ENCODE measurements at regions of chr20 and their contacts with region 1.

Region 1: DNA sequence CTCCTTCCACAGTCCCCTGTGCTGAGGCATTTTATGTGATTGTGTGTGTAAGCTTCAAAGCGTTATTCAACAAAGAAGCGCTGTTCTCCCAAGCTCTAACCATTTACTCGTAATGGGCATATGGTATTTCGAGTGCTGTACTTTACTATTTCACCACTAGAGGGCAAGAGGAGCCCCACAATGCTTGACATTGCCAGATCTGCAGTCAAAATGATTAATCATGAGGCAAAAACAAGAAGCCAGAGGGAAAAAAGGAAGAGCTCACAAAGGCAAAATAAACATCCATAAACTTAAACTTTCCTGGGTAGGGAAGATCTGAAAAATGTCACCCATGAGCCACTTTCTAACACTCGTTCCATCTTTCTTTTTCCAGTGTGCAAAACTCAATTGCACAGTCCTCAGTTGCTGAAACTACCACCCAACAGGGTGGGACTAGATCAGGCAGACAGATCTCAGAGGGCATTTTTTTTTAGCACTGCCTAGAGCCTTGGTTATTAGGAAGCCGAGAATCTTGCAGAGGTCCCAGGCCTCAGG is 215.0 kb upstream of the PLCB4 start:
- DNase-seq: peak; percentile 89
- ATAC-seq: peak; percentile 95
- H3K4me3 ChIP-seq: no peak overlapping the region
- H3K27ac ChIP-seq: no peak overlapping the region
- H3K4me1 ChIP-seq: peaks cover 19% of the 10 kb centered on the region
- H3K27me3 ChIP-seq: no peaks in the 10 kb centered on the region
- CTCF ChIP-seq: peak; percentile 91
- EP300 ChIP-seq: no peak
- POLR2A ChIP-seq: no peak
- RAD21 ChIP-seq: peak; percentile 79

Region 2: GRCh38 chr20:8809107-8809953 is 44.5 kb before region 1 on chr20:
- CTCF ChIA-PET with region 1: no interaction called
- POLR2A ChIA-PET with region 1: no interaction called
- in situ Hi-C with region 1: no loop called
- intact Hi-C with region 1: loop called (anchors 1 kb)
- DNase-seq: peak; percentile 95
- ATAC-seq: peak; percentile 98
- H3K4me3 ChIP-seq: peak overlapping the region in 2 of 3 experiments; percentile 9 to 34; a peak in 1 of 6 replicates
- H3K27ac ChIP-seq: peak overlapping the region; percentile 74
- H3K4me1 ChIP-seq: peaks cover 59% of the 10 kb centered on the region
- H3K27me3 ChIP-seq: no peaks in the 10 kb centered on the region
- CTCF ChIP-seq: no peak
- EP300 ChIP-seq: peak; percentile 70 to 90; a peak in 3 of 4 replicates
- POLR2A ChIP-seq: no peak
- RAD21 ChIP-seq: no peak

Region 3: GRCh38 chr20:8932192-8933165 is 78.6 kb after region 1 on chr20:
- CTCF ChIA-PET with region 1: no interaction called
- POLR2A ChIA-PET with region 1: no interaction called
- in situ Hi-C with region 1: no loop called
- intact Hi-C with region 1: no loop called
- DNase-seq: no peak
- ATAC-seq: no peak
- H3K4me3 ChIP-seq: no peak overlapping the region
- H3K27ac ChIP-seq: no peak overlapping the region
- H3K4me1 ChIP-seq: no peaks in the 10 kb centered on the region
- H3K27me3 ChIP-seq: peaks cover 0 to 8% of the 10 kb centered on the region in 2 experiments; a peak in 2 of 5 replicates
- CTCF ChIP-seq: no peak
- EP300 ChIP-seq: no peak
- POLR2A ChIP-seq: no peak
- RAD21 ChIP-seq: no peak

Region 4: DNA sequence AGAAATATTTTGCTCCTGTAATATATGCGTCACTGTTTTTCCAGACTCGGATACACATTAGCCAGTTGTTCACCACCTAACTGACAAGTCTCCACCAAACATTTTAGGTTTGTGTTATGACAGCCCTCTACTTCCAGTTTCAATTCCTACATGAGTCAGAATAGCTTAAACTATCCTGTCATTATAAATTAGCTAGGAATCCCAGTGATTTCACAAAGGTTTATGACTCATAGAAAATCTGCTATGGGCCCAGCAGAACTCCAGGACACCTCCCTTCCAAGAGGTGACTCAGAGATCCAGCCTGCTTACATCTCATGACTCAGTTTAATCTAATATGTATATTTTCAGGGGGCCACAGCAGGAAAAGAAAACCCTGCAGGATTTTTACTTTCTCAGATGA is 197.6 kb after region 1 on chr20:
- CTCF ChIA-PET with region 1: no interaction called
- POLR2A ChIA-PET with region 1: no interaction called
- in situ Hi-C with region 1: no loop called
- intact Hi-C with region 1: loop called (anchors 10 kb)
- DNase-seq: peak; percentile 43
- ATAC-seq: no peak
- H3K4me3 ChIP-seq: no peak overlapping the region
- H3K27ac ChIP-seq: no peak overlapping the region
- H3K4me1 ChIP-seq: no peaks in the 10 kb centered on the region
- H3K27me3 ChIP-seq: peaks cover 0 to 10% of the 10 kb centered on the region in 2 experiments; a peak in 1 of 5 replicates
- CTCF ChIP-seq: no peak
- EP300 ChIP-seq: no peak
- POLR2A ChIP-seq: no peak
- RAD21 ChIP-seq: no peak

Region 5: GRCh38 chr20:9215539-9215938 is 361.7 kb after region 1 on chr20:
- CTCF ChIA-PET with region 1: interaction called, 3 read pairs
- POLR2A ChIA-PET with region 1: no interaction called
- in situ Hi-C with region 1: no loop called
- intact Hi-C with region 1: loop called (anchors 5 kb)
- DNase-seq: peak; percentile 41
- ATAC-seq: peak; percentile 78
- H3K4me3 ChIP-seq: no peak overlapping the region
- H3K27ac ChIP-seq: no peak overlapping the region
- H3K4me1 ChIP-seq: no peaks in the 10 kb centered on the region
- H3K27me3 ChIP-seq: peaks cover 0 to 14% of the 10 kb centered on the region in 2 experiments; a peak in 2 of 5 replicates
- CTCF ChIP-seq: peak; percentile 47
- EP300 ChIP-seq: no peak
- POLR2A ChIP-seq: no peak
- RAD21 ChIP-seq: peak; percentile 35; the same call in 1 of the 2 replicates

Region 6: DNA sequence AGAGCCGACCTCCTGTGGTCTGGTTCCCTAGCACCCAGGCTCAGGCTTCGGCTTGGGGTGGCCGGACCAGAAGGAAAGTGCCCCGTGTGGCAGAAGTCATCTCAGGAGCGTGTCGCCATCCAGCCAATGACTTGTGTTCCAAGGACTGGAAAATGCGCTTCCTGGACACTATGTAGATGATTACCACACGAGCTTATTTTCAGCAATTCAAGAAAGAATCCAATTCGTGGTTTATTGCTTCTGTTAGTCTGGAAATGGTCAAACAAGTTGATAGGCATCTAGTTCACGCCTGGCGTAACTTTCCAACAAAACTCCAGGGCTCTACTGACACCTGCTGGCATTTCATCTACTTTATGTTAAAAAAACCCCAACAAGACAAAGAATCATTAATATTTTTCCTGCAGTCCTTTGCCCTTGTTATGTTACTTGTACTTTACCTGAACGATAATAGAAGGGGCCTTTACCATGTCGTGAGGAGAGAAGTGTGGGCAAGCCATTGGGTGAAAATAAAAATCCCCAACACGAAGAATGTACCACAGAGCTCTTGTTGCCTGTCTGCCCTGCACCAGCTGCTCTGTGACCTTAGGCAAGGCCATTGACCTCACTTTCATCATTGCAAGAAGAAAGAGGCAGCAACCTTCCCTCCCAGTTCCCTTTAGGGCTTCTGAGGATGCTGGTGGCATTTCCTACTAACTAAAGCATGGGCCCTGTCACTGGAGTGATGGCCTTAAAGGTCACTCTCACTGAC is 505.9 kb after region 1 on chr20:
- CTCF ChIA-PET with region 1: interaction called, 20 read pairs
- POLR2A ChIA-PET with region 1: no interaction called
- in situ Hi-C with region 1: loop called (anchors 10 kb)
- intact Hi-C with region 1: loop called (anchors 1 kb)
- DNase-seq: peak; percentile 67
- ATAC-seq: peak; percentile 97
- H3K4me3 ChIP-seq: peak overlapping the region in 1 of 3 experiments; percentile 31; a peak in 2 of 6 replicates
- H3K27ac ChIP-seq: no peak overlapping the region
- H3K4me1 ChIP-seq: peaks cover 11% of the 10 kb centered on the region
- H3K27me3 ChIP-seq: peaks cover 0 to 3% of the 10 kb centered on the region in 2 experiments; a peak in 1 of 5 replicates
- CTCF ChIP-seq: peak; percentile 83
- EP300 ChIP-seq: no peak
- POLR2A ChIP-seq: no peak
- RAD21 ChIP-seq: peak; percentile 80; the same call in 1 of the 2 replicates